ENCODE measurements at regions of chr18 and their contacts with region 1.

Region 1: GRCh38 chr18:7272311-7273049 is 41.6 kb downstream of the LRRC30 start:
- DNase-seq: peak; percentile 33 to 71
- ATAC-seq: peak; percentile 83 to 91; a peak in 5 of 6 replicates
- H3K4me3 ChIP-seq: no peak overlapping the region
- H3K27ac ChIP-seq: peak overlapping the region; percentile 69 to 80
- H3K4me1 ChIP-seq: peaks cover 16% of the 10 kb centered on the region
- CTCF ChIP-seq: peak; percentile 67
- EP300 ChIP-seq: no peak
- POLR2A ChIP-seq: no peak
- RAD21 ChIP-seq: peak; percentile 76 to 77

Region 2: DNA sequence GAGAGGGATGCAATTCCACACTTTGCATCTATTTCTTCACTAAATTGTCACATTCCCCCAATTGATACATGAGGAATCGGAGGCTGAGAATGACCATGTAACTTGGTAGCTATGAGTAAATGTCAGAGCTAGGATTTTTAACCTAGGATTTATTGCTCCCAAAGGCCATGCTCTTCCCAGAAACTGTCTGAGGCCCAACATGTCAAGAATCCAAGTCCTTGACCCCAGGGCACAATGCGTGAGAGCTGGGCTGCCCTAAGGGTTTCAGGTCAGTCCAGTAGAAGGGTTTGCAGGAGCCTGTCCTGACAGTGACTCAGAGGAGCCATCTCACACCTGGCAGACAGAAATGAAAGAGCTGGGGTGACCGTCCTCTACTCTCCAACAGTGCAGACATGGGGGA is 11.3 kb before region 1 on chr18:
- CTCF ChIA-PET with region 1: interaction called, 29 read pairs
- POLR2A ChIA-PET with region 1: no interaction called
- DNase-seq: no peak
- ATAC-seq: no peak
- H3K4me3 ChIP-seq: no peak overlapping the region
- H3K27ac ChIP-seq: no peak overlapping the region
- H3K4me1 ChIP-seq: no peaks in the 10 kb centered on the region
- CTCF ChIP-seq: no peak
- EP300 ChIP-seq: no peak
- POLR2A ChIP-seq: no peak
- RAD21 ChIP-seq: no peak

Region 3: GRCh38 chr18:7566567-7567473 is 294.3 kb after region 1 on chr18 and contains the start of gene PTPRM:
- CTCF ChIA-PET with region 1: interaction called, 67 read pairs
- POLR2A ChIA-PET with region 1: interaction called, 14 read pairs
- DNase-seq: peak; percentile 52 to 65
- ATAC-seq: peak; percentile 82 to 83
- H3K4me3 ChIP-seq: peak within 1 kb of the TSS; percentile 85
- H3K27ac ChIP-seq: peak within 1 kb of the TSS; percentile 83 to 98
- H3K4me1 ChIP-seq: peaks cover 17% of the 10 kb centered on the region
- CTCF ChIP-seq: peak; percentile 74
- EP300 ChIP-seq: no peak
- POLR2A ChIP-seq: 0 out of 2 replicates have a peak, but pooled peaks have one; percentile 20
- RAD21 ChIP-seq: peak; percentile 5 to 63; a peak in 3 of 5 replicates
- polyA plus RNA-seq, gene PTPRM: 199 and 236 TPM in 2 replicates

Region 4: GRCh38 chr18:7575157-7576028 is 302.9 kb after region 1 on chr18:
- CTCF ChIA-PET with region 1: interaction called, 10 read pairs
- POLR2A ChIA-PET with region 1: no interaction called
- DNase-seq: peak; percentile 49 to 63
- ATAC-seq: peak; percentile 89 to 91
- H3K4me3 ChIP-seq: peak overlapping the region; percentile 15; the same call in 2 of the 3 replicates
- H3K27ac ChIP-seq: peak overlapping the region; percentile 79 to 84
- H3K4me1 ChIP-seq: peaks cover 81% of the 10 kb centered on the region
- CTCF ChIP-seq: no peak; the same call in 2 of the 3 replicates
- EP300 ChIP-seq: no peak
- POLR2A ChIP-seq: no peak
- RAD21 ChIP-seq: peak; percentile 46 to 47; a peak in 4 of 5 replicates

Region 5: DNA sequence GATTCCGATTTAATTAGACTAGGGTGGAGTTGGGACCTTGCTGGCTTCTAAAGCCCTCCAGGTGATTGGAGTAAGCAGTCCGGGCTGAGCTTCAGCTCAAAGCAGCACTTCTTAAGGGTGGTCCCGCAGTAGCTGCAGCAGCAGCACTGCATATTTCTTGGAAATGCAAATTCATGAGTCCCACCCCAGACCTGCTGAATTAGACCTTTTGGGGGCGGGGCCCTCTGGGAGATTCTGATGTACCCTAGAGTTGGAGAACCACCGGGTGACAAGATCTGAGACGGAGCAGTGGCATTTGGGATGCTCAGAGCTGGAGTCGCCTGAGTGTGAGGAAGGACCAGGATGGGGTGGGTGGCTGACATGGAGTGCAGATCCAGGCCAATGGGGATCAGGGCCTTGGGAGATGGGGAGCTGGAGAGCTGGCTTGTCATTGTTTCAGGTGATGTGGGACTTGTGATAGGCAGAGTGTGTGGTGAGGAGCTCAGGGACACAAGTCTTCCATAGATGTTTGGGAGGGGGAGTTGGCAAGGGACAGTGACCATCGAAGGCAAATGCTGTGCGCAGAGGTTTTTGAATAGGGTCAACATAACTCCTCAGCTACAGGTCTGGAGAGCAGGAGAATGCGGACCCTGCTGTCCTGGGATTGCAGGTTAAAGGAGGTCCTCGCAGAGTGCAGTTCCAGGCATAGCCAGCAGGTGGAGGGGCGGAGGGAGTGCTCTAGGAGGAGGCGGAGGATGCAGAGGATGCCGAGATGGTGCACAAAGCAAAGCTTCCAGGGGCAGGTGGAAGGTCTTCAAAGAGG is 1205.9 kb after region 1 on chr18:
- CTCF ChIA-PET with region 1: interaction called, 55 read pairs
- POLR2A ChIA-PET with region 1: no interaction called
- DNase-seq: peak; percentile 51 to 67
- ATAC-seq: peak; percentile 85 to 94
- H3K4me3 ChIP-seq: no peak overlapping the region
- H3K27ac ChIP-seq: no peak overlapping the region
- H3K4me1 ChIP-seq: no peaks in the 10 kb centered on the region; the same call in 2 of the 3 replicates
- CTCF ChIP-seq: peak; percentile 43; the same call in 2 of the 3 replicates
- EP300 ChIP-seq: no peak
- POLR2A ChIP-seq: no peak
- RAD21 ChIP-seq: peak in 1 of 2 experiments; percentile 27; a peak in 3 of 5 replicates